ENCODE measurements at regions of chr4 and their contacts with region 1.

Region 1: GRCh38 chr4:16026160-16026761 is 57.6 kb downstream of the PROM1 start:
- DNase-seq: peak; percentile 44
- ATAC-seq: peak; percentile 26; the same call in 1 of the 3 replicates
- H3K4me3 ChIP-seq: no peak overlapping the region
- H3K27ac ChIP-seq: no peak overlapping the region
- H3K4me1 ChIP-seq: peaks cover 20% of the 10 kb centered on the region
- H3K27me3 ChIP-seq: no peaks in the 10 kb centered on the region
- CTCF ChIP-seq: peak; percentile 80
- EP300 ChIP-seq: no peak
- POLR2A ChIP-seq: no peak
- RAD21 ChIP-seq: peak; percentile 77

Region 2: DNA sequence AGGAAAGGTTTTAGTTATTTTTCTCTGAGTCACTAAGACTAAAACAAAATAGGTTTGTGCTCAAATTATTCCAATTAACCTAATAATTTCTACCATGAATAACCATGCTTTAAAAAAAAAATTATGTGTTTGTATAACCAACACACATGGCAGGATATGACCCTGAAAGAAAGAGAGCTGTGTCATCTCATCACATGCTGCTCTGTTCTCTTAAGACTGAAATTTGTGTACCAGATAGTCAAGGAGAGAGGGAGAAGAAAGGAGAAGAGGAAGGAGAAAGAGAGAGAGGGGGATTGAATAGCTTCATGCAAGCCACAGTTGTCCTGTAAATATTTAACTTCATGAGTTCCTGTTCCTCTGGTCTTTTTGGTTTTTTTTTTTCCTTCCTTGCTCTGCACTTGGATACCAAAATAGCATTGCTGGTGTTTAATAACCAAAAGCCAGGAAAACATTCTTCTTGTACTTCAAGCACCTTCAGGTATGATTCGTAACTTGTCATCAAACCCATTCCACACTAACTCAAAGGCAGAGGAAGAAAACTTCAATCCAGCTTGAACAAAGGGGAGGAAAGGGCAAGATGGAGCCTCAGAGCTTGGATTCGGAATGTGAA is 63.9 kb after region 1 on chr4:
- CTCF ChIA-PET with region 1: no interaction called
- POLR2A ChIA-PET with region 1: no interaction called
- in situ Hi-C with region 1: no loop called
- intact Hi-C with region 1: no loop called
- DNase-seq: no peak
- ATAC-seq: no peak
- H3K4me3 ChIP-seq: no peak overlapping the region
- H3K27ac ChIP-seq: no peak overlapping the region
- H3K4me1 ChIP-seq: peaks cover 11% of the 10 kb centered on the region
- H3K27me3 ChIP-seq: peaks cover 2 to 8% of the 10 kb centered on the region in 2 experiments; a peak in 2 of 5 replicates
- CTCF ChIP-seq: no peak
- EP300 ChIP-seq: no peak
- POLR2A ChIP-seq: no peak
- RAD21 ChIP-seq: no peak

Region 3: DNA sequence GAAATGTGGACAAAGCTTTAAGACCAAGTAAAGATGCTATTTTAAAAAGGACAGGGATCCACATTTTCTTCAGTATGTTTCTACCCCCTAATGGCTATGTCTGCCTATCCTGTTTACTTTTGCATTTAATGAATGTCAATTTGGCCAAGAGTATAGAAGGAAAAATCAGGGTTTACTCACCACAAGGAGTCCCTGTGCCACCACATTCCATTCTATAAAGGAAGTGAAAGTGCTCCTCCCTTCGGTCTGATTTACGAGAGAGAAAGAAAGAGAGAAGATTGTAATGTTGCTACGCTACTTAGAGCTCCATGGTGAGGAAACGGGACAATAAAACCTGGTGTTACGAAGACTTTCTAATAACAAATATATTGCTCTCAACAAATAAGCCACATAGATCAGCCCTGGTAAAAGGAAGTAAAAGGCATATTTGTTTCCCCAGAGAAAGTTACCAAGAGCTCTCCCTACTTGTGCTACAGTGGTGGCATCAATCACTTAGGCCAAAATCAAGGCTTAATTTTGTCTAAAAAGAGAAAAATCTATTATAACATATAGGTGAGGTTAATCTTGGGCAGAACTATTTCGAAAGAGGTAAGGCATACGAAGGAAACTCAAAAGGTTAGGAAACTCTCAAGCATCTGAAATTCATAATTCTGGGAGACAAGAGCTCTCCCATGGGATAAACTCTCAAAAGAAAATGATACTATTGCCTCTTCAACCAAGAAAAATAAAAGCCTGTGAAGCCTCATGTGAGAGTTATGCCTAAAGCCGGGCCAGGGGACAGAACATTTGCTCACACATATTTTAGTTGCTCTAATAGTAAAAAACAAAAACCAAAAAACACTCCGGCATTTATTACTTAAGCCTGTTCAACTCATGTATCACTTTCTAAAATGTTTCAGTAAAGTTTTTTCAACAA is 170.5 kb after region 1 on chr4:
- CTCF ChIA-PET with region 1: interaction called, 16 read pairs
- POLR2A ChIA-PET with region 1: no interaction called
- in situ Hi-C with region 1: loop called (anchors 5 kb)
- intact Hi-C with region 1: loop called (anchors 1 kb)
- DNase-seq: peak; percentile 4
- ATAC-seq: no peak
- H3K4me3 ChIP-seq: no peak overlapping the region
- H3K27ac ChIP-seq: no peak overlapping the region
- H3K4me1 ChIP-seq: no peaks in the 10 kb centered on the region
- H3K27me3 ChIP-seq: no peaks in the 10 kb centered on the region
- CTCF ChIP-seq: no peak
- EP300 ChIP-seq: no peak
- POLR2A ChIP-seq: no peak
- RAD21 ChIP-seq: no peak

Region 4: GRCh38 chr4:16205298-16206164 is 179.3 kb after region 1 on chr4:
- CTCF ChIA-PET with region 1: interaction called, 14 read pairs
- POLR2A ChIA-PET with region 1: no interaction called
- in situ Hi-C with region 1: loop called (anchors 5 kb)
- intact Hi-C with region 1: no loop called
- DNase-seq: peak; percentile 31
- ATAC-seq: peak; percentile 79
- H3K4me3 ChIP-seq: no peak overlapping the region
- H3K27ac ChIP-seq: no peak overlapping the region
- H3K4me1 ChIP-seq: no peaks in the 10 kb centered on the region
- H3K27me3 ChIP-seq: no peaks in the 10 kb centered on the region
- CTCF ChIP-seq: peak; percentile 61
- EP300 ChIP-seq: no peak
- POLR2A ChIP-seq: no peak
- RAD21 ChIP-seq: peak; percentile 38; the same call in 1 of the 2 replicates

Region 5: GRCh38 chr4:16443504-16444088 is 417.3 kb after region 1 on chr4:
- CTCF ChIA-PET with region 1: no interaction called
- POLR2A ChIA-PET with region 1: no interaction called
- in situ Hi-C with region 1: no loop called
- intact Hi-C with region 1: loop called (anchors 5 kb)
- DNase-seq: peak; percentile 30
- ATAC-seq: peak; percentile 68
- H3K4me3 ChIP-seq: no peak overlapping the region
- H3K27ac ChIP-seq: no peak overlapping the region
- H3K4me1 ChIP-seq: no peaks in the 10 kb centered on the region
- H3K27me3 ChIP-seq: no peaks in the 10 kb centered on the region
- CTCF ChIP-seq: peak; percentile 66
- EP300 ChIP-seq: no peak
- POLR2A ChIP-seq: no peak
- RAD21 ChIP-seq: 0 out of 2 replicates have a peak, but pooled peaks have one; percentile 10